ENCODE measurements at regions of chr2 and their contacts with region 1.

Region 1: DNA sequence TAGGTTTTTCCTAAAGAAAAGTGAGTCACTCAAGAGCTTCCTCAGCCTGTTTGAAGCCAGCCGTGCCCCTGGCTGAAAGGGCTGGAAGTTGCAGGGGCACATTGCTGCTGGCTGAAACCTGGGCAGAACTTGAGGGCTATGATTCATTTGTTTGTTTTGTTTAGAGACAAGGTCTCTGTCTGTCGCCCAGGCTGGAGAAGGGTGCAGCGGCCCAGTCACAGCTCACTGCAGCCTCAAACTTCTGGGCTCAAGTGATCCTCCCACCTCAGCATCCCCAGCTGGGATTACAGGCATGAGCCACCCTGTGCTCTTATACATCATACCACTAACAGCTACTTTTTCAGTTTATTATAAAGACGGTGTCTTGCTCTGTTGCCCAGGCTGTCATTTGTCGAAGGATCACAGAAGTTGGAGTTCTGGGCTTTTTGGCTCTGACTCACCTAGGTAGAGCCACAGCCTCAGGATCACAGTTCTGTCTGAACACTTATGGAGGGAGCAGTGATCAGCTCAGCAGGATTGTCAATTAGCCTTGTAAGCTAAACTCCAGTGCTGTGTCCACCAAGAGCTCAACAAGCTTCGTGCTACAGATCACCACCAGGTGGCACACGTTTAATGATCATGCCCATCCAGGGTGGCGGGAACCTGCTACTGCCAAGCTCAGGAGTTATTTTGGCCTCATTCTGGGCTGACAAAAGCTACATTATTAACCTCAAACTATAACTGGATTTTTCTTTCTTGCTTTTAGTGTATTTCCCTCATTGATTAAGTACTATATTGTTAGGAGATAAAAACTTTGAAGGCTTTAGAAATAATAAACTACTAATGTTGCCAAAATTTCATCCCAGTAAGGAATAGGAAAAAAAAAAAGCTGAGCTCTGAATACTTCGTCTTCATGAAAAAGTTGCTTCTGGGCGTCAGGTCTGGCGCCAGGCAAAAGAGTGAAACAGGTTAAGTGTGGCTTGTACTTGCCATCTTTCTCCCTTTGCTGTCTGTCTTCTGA is 57.9 kb downstream of the ARHGEF33 start:
- DNase-seq: peak; percentile 89
- ATAC-seq: peak; percentile 94
- H3K4me3 ChIP-seq: peak overlapping the region in 1 of 3 experiments; percentile 32; a peak in 2 of 6 replicates
- H3K27ac ChIP-seq: peak overlapping the region; percentile 39
- H3K4me1 ChIP-seq: peaks cover 46% of the 10 kb centered on the region
- H3K27me3 ChIP-seq: no peaks in the 10 kb centered on the region
- CTCF ChIP-seq: peak; percentile 97
- EP300 ChIP-seq: peak in 1 of 2 experiments; percentile 24; a peak in 1 of 4 replicates
- POLR2A ChIP-seq: no peak
- RAD21 ChIP-seq: peak; percentile 86

Region 2: GRCh38 chr2:38850045-38850444 is 97.5 kb before region 1 on chr2:
- CTCF ChIA-PET with region 1: no interaction called
- POLR2A ChIA-PET with region 1: no interaction called
- in situ Hi-C with region 1: no loop called
- intact Hi-C with region 1: no loop called
- DNase-seq: no peak
- ATAC-seq: no peak
- H3K4me3 ChIP-seq: no peak overlapping the region
- H3K27ac ChIP-seq: no peak overlapping the region
- H3K4me1 ChIP-seq: no peaks in the 10 kb centered on the region
- H3K27me3 ChIP-seq: no peaks in the 10 kb centered on the region
- CTCF ChIP-seq: no peak
- EP300 ChIP-seq: no peak
- POLR2A ChIP-seq: no peak
- RAD21 ChIP-seq: no peak

Region 3: GRCh38 chr2:38863378-38863695 is 84.2 kb before region 1 on chr2:
- CTCF ChIA-PET with region 1: no interaction called
- POLR2A ChIA-PET with region 1: no interaction called
- in situ Hi-C with region 1: no loop called
- intact Hi-C with region 1: no loop called
- DNase-seq: no peak
- ATAC-seq: no peak
- H3K4me3 ChIP-seq: no peak overlapping the region
- H3K27ac ChIP-seq: no peak overlapping the region
- H3K4me1 ChIP-seq: 0 out of 2 replicates have a peak, but pooled peaks cover 4% of the 10 kb centered on the region
- H3K27me3 ChIP-seq: no peaks in the 10 kb centered on the region
- CTCF ChIP-seq: no peak
- EP300 ChIP-seq: no peak
- POLR2A ChIP-seq: no peak
- RAD21 ChIP-seq: no peak

Region 4: GRCh38 chr2:38875576-38876367 is 71.8 kb before region 1 on chr2 and contains the starts of genes DHX57 and MORN2:
- CTCF ChIA-PET with region 1: no interaction called
- POLR2A ChIA-PET with region 1: interaction called, 6 read pairs
- in situ Hi-C with region 1: no loop called
- intact Hi-C with region 1: loop called (anchors 2 kb)
- DNase-seq: peak; percentile 87
- ATAC-seq: peak; percentile 99
- H3K4me3 ChIP-seq: peak within 1 kb of the TSS; percentile 58 to 97 (median 81)
- H3K27ac ChIP-seq: peak within 1 kb of the TSS; percentile 54
- H3K4me1 ChIP-seq: peaks cover 28% of the 10 kb centered on the region
- H3K27me3 ChIP-seq: no peaks in the 10 kb centered on the region; a peak in 1 of 5 replicates
- CTCF ChIP-seq: peak; percentile 14; the same call in 1 of the 2 replicates
- EP300 ChIP-seq: peak in 1 of 2 experiments; percentile 53; a peak in 1 of 4 replicates
- POLR2A ChIP-seq: peak; percentile 75 to 88
- RAD21 ChIP-seq: peak; percentile 48; the same call in 1 of the 2 replicates
- total RNA-seq, gene DHX57: 24.2 and 33.3 TPM in 2 replicates
- total RNA-seq, gene MORN2: 28.0 and 38.6 TPM in 2 replicates

Region 5: GRCh38 chr2:38981003-38981669 is 33.6 kb after region 1 on chr2:
- CTCF ChIA-PET with region 1: no interaction called
- POLR2A ChIA-PET with region 1: interaction called, 5 read pairs
- in situ Hi-C with region 1: loop called (anchors 5 kb)
- intact Hi-C with region 1: loop called (anchors 1 kb)
- DNase-seq: peak; percentile 42
- ATAC-seq: peak; percentile 53
- H3K4me3 ChIP-seq: peak overlapping the region in 2 of 3 experiments; percentile 34 to 44; a peak in 2 of 6 replicates
- H3K27ac ChIP-seq: peak overlapping the region; percentile 98
- H3K4me1 ChIP-seq: peaks cover 58% of the 10 kb centered on the region
- H3K27me3 ChIP-seq: no peaks in the 10 kb centered on the region
- CTCF ChIP-seq: no peak
- EP300 ChIP-seq: no peak
- POLR2A ChIP-seq: no peak
- RAD21 ChIP-seq: no peak

Region 6: DNA sequence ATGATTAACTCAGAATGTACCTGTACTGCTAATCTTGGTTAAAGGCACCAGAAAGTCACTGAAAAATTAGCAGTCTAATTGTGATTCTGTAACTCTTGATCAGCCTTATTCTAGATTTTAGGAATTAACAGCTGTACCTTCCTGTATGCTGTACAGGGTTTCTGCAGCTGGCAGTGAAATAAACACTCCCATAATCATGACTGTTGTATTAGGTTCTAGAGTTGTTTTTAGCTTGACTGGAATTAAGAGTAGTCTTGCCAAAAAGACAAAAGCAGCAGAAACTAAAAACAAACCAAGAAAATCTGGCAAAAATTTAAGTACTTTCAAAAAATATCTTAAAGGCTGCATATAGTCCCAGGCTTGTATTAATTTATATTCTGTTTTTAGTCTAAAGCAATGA is 69.8 kb after region 1 on chr2:
- CTCF ChIA-PET with region 1: no interaction called
- POLR2A ChIA-PET with region 1: no interaction called
- in situ Hi-C with region 1: no loop called
- intact Hi-C with region 1: loop called (anchors 5 kb)
- DNase-seq: no peak
- ATAC-seq: no peak
- H3K4me3 ChIP-seq: no peak overlapping the region
- H3K27ac ChIP-seq: no peak overlapping the region
- H3K4me1 ChIP-seq: no peaks in the 10 kb centered on the region
- H3K27me3 ChIP-seq: no peaks in the 10 kb centered on the region
- CTCF ChIP-seq: no peak
- EP300 ChIP-seq: no peak
- POLR2A ChIP-seq: no peak
- RAD21 ChIP-seq: no peak

Region 7: GRCh38 chr2:39059366-39059952 is 111.9 kb after region 1 on chr2:
- CTCF ChIA-PET with region 1: no interaction called
- POLR2A ChIA-PET with region 1: interaction called, 3 read pairs
- in situ Hi-C with region 1: loop called (anchors 10 kb)
- intact Hi-C with region 1: no loop called
- DNase-seq: peak; percentile 62
- ATAC-seq: no peak
- H3K4me3 ChIP-seq: no peak overlapping the region
- H3K27ac ChIP-seq: no peak overlapping the region
- H3K4me1 ChIP-seq: no peaks in the 10 kb centered on the region
- H3K27me3 ChIP-seq: no peaks in the 10 kb centered on the region
- CTCF ChIP-seq: peak; percentile 64
- EP300 ChIP-seq: no peak
- POLR2A ChIP-seq: no peak
- RAD21 ChIP-seq: peak; percentile 64

Region 8: GRCh38 chr2:39179974-39180970 is 232.7 kb after region 1 on chr2:
- CTCF ChIA-PET with region 1: no interaction called
- POLR2A ChIA-PET with region 1: no interaction called
- in situ Hi-C with region 1: no loop called
- intact Hi-C with region 1: no loop called
- DNase-seq: no peak
- ATAC-seq: no peak; the same call in 1 of the 3 replicates
- H3K4me3 ChIP-seq: no peak overlapping the region
- H3K27ac ChIP-seq: no peak overlapping the region
- H3K4me1 ChIP-seq: peaks cover 18% of the 10 kb centered on the region
- H3K27me3 ChIP-seq: no peaks in the 10 kb centered on the region
- CTCF ChIP-seq: no peak
- EP300 ChIP-seq: no peak
- POLR2A ChIP-seq: no peak
- RAD21 ChIP-seq: no peak

Region 9: DNA sequence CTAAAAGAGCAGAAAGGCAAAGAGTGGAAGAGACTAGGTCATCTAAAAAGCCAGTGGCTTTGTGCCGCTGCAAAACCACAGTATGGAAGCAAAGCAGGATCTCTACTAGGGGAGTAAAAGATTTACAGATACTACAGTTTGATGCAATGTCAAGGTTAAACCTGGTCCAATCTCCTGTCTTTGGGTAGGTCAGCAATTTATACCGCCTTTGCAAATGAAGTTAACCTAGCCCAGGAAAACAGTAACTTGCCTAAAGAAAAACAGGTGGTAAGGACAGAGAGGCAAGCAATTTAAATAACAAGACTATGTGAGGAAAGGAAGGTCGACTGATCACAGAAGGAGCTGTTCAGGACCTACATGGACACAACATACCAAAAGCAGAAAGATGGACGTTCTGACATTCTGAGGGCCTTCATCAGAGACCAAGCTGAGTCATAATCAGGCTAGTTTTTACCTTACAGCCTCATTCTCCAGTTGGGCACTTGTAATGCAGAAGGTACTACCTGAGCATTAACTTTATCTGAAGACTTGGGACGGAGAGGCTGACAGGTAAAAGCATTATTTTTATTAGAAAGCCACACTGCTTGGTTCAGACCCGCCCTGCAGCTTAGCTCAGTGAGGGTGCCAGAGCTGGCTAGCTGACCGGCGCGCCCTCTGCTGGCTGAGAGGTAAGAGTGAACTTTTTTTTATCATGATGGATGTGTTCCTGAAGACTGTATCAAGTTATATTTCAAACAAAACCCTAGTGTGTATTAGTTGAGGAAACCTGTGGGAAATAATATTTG is 280.3 kb after region 1 on chr2:
- CTCF ChIA-PET with region 1: interaction called, 9 read pairs
- POLR2A ChIA-PET with region 1: interaction called, 4 read pairs
- in situ Hi-C with region 1: loop called (anchors 5 kb)
- intact Hi-C with region 1: loop called (anchors 1 kb)
- DNase-seq: peak; percentile 73
- ATAC-seq: peak; percentile 88
- H3K4me3 ChIP-seq: peak overlapping the region; percentile 58 to 73 (median 68); a peak in 5 of 6 replicates
- H3K27ac ChIP-seq: peak overlapping the region; percentile 39
- H3K4me1 ChIP-seq: peaks cover 29% of the 10 kb centered on the region
- H3K27me3 ChIP-seq: no peaks in the 10 kb centered on the region
- CTCF ChIP-seq: peak; percentile 93
- EP300 ChIP-seq: no peak
- POLR2A ChIP-seq: no peak
- RAD21 ChIP-seq: peak; percentile 84